ENCODE measurements at regions of chr20 and their contacts with region 1.

Region 1: DNA sequence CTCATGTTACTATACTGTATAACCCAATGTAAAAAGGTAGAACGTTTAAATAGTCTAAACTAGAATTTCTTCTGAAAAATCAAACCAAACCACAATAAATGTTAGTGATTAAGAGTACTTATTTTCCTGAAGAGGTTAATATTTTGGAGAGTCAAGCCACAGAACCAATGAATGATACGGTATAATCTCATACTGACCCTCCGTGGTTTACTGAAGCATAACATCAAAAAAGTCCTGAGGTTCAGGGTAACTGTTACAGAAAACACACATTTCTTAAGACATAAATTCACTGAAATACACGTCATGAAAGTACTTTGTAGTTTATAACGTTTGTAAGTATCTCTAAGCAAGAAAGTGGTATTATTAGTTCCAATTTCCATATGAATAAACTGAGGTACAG is 28.9 kb downstream of the ESF1 start:
- DNase-seq: no peak
- H3K4me3 Mint-ChIP-seq: no peak overlapping the region
- H3K27ac Mint-ChIP-seq: no peak overlapping the region
- H3K4me1 Mint-ChIP-seq: no peaks in the 10 kb centered on the region
- H3K27me3 Mint-ChIP-seq: no peaks in the 10 kb centered on the region

Region 2: GRCh38 chr20:13708234-13708633 is 47.6 kb before region 1 on chr20:
- CTCF ChIA-PET with region 1: no interaction called
- intact Hi-C with region 1: no loop called
- DNase-seq: no peak
- H3K4me3 Mint-ChIP-seq: no peak overlapping the region
- H3K27ac Mint-ChIP-seq: no peak overlapping the region
- H3K4me1 Mint-ChIP-seq: no peaks in the 10 kb centered on the region
- H3K27me3 Mint-ChIP-seq: no peaks in the 10 kb centered on the region

Region 3: GRCh38 chr20:13771853-13772453 is 16.1 kb after region 1 on chr20:
- CTCF ChIA-PET with region 1: interaction called, 10 read pairs
- intact Hi-C with region 1: no loop called
- DNase-seq: no peak
- H3K4me3 Mint-ChIP-seq: no peak overlapping the region
- H3K27ac Mint-ChIP-seq: no peak overlapping the region
- H3K4me1 Mint-ChIP-seq: peaks cover 18% of the 10 kb centered on the region
- H3K27me3 Mint-ChIP-seq: no peaks in the 10 kb centered on the region